Heart left ventricle (tissue), 16 donors: ENCODE measurements at regions of chr6 and their contacts with region 1.

Region 1: GRCh38 chr6:156175971-156176421 is 601.2 kb upstream of the ARID1B start:
- DNase-seq: peak; percentile 58 to 78 (median 67)
- ATAC-seq: peak; percentile 80 to 97 (median 87)
- H3K4me3 ChIP-seq: peak overlapping the region in 6 of 12 donors; percentile 7 to 43 (median 24)
- H3K27ac ChIP-seq: peak overlapping the region in 6 of 12 donors; percentile 34 to 69 (median 44)
- H3K4me1 ChIP-seq: peaks cover 0 to 14% (median 0%) of the 10 kb centered on the region in 12 donors
- H3K27me3 ChIP-seq: no peaks in the 10 kb centered on the region
- CTCF ChIP-seq: peak in 8 of 12 donors; percentile 13 to 47 (median 30)
- POLR2A ChIP-seq: no peak

Region 2: DNA sequence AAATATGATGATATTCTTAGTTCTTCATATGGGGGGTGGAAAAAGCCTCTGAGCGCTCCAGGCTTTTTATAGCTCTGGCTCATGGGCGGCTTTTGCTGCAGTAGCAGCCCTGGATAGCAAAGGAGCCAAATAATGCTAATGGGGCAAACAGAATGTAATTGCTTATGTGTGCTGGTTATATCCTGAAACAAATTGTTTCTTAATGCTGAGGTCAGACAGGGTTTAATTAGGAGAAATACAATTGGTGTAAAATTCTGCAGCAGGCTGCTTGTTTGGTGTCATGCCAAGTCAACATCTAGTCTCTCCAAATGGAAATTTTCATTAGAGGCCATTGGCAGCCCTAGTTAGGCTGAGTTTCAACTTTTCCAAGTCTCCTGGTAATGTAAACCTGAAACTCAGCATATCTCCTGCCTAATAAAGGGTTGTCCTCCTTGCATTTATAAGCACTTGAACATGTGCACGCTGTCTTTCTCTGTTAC is 190.3 kb before region 1 on chr6:
- intact Hi-C with region 1: loop called in 1 of 10 experiments (anchors 10 kb)
- DNase-seq: peak in 4 of 5 donors; percentile 38 to 66 (median 52)
- ATAC-seq: peak; percentile 92 to 94 (median 93)
- H3K4me3 ChIP-seq: no peak overlapping the region
- H3K27ac ChIP-seq: peak overlapping the region in 11 of 12 donors; percentile 36 to 70 (median 52)
- H3K4me1 ChIP-seq: peaks cover 0 to 27% (median 14%) of the 10 kb centered on the region in 12 donors
- H3K27me3 ChIP-seq: no peaks in the 10 kb centered on the region
- CTCF ChIP-seq: no peak
- POLR2A ChIP-seq: no peak

Region 3: GRCh38 chr6:156191895-156192294 is 15.9 kb after region 1 on chr6:
- intact Hi-C with region 1: loop called in 1 of 10 experiments (anchors 2 kb)
- DNase-seq: no peak
- ATAC-seq: no peak
- H3K4me3 ChIP-seq: no peak overlapping the region
- H3K27ac ChIP-seq: no peak overlapping the region
- H3K4me1 ChIP-seq: no peaks in the 10 kb centered on the region
- H3K27me3 ChIP-seq: no peaks in the 10 kb centered on the region
- CTCF ChIP-seq: no peak
- POLR2A ChIP-seq: no peak